ENCODE measurements at regions of chr9 and their contacts with region 1.

Region 1: DNA sequence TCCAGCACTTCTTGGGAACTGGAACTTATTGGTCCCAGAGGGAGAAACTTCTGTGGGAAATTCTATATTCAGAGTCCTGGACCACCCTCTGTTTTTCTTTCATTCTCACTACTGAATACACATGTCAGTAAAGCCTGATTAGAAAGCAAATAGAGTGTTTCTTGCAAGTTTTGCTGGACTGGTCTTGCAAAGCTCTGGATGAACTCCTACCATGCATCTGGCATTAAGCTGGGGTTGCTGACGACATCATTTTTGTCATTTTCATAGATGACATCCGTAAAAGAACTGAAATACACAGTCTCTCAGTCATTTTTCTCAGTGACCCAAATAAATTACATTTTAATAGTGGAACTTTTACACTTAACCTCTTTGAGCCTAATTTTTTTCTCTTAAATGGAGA is 283.2 kb downstream of the DMAC1 start:
- DNase-seq: no peak
- ATAC-seq: no peak

Region 2: DNA sequence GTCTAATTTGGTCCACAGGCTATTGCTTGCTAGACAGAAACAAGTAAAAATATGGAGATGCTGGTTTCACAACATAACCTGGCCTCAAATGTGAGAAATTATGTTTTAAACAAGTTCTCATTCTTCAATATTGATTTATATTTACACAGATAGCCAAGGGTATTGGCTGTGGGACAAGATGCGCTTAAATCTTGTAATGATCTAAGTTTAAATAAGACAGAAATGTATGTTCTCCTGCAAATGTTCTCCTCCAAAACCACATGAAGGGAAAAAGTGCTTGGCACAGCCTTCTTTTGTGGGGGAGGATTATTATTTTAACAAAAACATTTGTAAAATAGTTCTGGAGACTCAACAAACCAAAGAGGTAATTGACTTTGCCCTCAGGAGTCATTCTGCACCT is 72.8 kb before region 1 on chr9:
- intact Hi-C with region 1: loop called (anchors 2 kb)
- DNase-seq: no peak
- ATAC-seq: no peak

Region 3: DNA sequence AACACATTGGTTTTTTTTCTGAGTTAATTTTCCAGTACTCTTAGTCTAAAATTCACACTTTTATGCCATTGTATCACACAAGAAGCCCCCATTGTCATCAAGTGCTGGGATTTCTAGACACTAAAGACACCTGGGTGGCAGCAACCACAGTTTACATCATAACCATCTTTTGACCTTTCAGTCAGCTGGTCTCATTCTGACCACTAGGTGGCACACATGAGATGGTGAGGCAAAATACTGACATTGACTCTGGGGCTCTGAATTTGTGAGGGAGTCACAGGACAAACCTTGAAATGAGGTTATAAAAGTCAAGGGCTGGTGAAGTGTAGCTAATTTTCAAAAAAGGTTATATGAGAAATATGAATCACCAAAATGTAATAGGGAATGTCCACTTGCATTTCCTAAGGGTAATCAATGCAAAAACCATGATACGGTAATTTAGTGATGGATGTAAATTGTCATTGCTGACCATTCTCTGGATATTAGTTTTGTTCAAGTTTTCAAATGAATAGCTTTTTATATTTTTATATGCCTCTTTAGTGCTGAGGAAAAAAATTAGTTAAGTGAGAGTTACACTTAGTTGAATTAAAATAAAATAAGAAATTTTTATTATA is 53.8 kb after region 1 on chr9:
- intact Hi-C with region 1: no loop called
- DNase-seq: peak; percentile 59
- ATAC-seq: no peak

Region 4: DNA sequence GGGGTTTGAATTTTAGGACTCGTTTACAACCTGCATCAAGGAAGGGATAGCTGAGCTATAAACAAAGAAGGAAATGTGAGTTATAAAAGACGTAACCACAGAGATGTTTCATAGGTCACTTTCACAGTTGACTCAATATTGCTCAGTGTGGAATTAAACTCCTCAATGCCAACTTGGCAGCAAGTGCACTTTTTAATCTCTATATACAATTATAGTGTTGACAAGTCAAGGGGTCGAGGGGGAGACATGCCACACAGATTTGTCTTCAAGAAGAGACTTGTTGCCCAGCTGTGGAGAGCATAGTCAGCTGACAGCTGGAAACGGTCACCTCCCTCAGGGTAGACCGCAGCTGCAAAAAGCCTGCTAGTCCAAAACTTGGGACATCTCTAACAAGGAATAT is 446.6 kb after region 1 on chr9:
- intact Hi-C with region 1: no loop called
- DNase-seq: no peak
- ATAC-seq: no peak

Region 5: GRCh38 chr9:8011974-8012373 is 495.6 kb after region 1 on chr9:
- intact Hi-C with region 1: no loop called
- DNase-seq: no peak
- ATAC-seq: no peak